ENCODE measurements at regions of chr20 and their contacts with region 1.

Region 1: GRCh38 chr20:53656293-53657202 is 62.9 kb upstream of the ZNF217 start:
- DNase-seq: peak; percentile 49
- ATAC-seq: no peak
- H3K4me3 ChIP-seq: no peak overlapping the region
- H3K27ac ChIP-seq: peak overlapping the region; percentile 8
- H3K4me1 ChIP-seq: peaks cover 22% of the 10 kb centered on the region
- H3K27me3 ChIP-seq: no peaks in the 10 kb centered on the region
- CTCF ChIP-seq: no peak

Region 2: GRCh38 chr20:53594068-53595017 is 62.2 kb before region 1 on chr20:
- CTCF ChIA-PET with region 1: no interaction called
- POLR2A ChIA-PET with region 1: no interaction called
- intact Hi-C with region 1: no loop called
- DNase-seq: peak; percentile 98
- ATAC-seq: peak; percentile 69
- H3K4me3 ChIP-seq: peak overlapping the region; percentile 88
- H3K27ac ChIP-seq: peak overlapping the region; percentile 65
- H3K4me1 ChIP-seq: peaks cover 41% of the 10 kb centered on the region
- H3K27me3 ChIP-seq: no peaks in the 10 kb centered on the region
- CTCF ChIP-seq: no peak

Region 3: GRCh38 chr20:53692413-53693067 is 36.0 kb after region 1 on chr20:
- CTCF ChIA-PET with region 1: no interaction called
- POLR2A ChIA-PET with region 1: no interaction called
- intact Hi-C with region 1: loop called (anchors 5 kb)
- DNase-seq: peak; percentile 74
- ATAC-seq: peak; percentile 16; the same call in 1 of the 2 replicates
- H3K4me3 ChIP-seq: no peak overlapping the region
- H3K27ac ChIP-seq: no peak overlapping the region
- H3K4me1 ChIP-seq: peaks cover 36% of the 10 kb centered on the region
- H3K27me3 ChIP-seq: no peaks in the 10 kb centered on the region
- CTCF ChIP-seq: no peak

Region 4: GRCh38 chr20:53706008-53706465 is 49.5 kb after region 1 on chr20:
- CTCF ChIA-PET with region 1: no interaction called
- POLR2A ChIA-PET with region 1: no interaction called
- intact Hi-C with region 1: no loop called
- DNase-seq: peak; percentile 28
- ATAC-seq: no peak
- H3K4me3 ChIP-seq: no peak overlapping the region
- H3K27ac ChIP-seq: no peak overlapping the region
- H3K4me1 ChIP-seq: peaks cover 18% of the 10 kb centered on the region
- H3K27me3 ChIP-seq: no peaks in the 10 kb centered on the region
- CTCF ChIP-seq: no peak